ENCODE measurements at regions of chr16 and their contacts with region 1.

Region 1: DNA sequence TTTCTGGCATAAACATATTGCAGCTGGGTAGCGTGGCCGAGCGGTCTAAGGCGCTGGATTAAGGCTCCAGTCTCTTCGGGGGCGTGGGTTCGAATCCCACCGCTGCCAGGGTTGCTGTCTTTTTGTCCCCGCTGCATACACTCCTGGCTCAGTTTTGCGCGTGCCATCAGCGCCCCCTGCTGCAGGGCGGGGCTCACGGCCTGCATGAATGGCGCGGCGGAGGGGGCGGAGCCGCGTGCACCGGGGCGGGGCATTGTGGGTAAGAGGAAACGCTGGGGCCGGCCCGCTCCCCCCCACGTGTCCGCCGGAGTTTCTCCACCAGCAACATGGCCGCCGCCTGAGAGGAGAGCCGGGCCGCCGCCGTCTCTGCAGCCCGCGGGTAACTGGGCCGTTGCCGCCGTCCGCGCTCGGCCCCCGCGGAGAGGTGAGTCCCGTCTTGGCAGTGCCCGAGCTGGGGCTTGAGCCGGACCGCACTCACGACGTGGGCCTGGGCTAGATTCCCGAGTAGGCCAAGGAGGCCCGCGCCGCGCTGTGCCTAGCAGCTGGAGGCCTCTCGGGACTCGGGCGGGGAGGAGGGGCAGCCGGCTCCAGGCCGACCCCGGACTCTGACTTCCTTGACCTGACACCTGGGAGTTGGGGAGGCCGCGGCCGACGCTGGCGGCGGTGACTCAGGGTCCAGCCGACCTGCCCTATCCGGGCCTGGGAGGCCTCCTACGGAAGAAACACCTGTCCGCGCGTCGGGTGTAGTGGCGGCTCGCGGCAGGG is at the start of gene POLR3E:
- DNase-seq: peak; percentile 100
- ATAC-seq: peak; percentile 95
- H3K4me3 ChIP-seq: peak within 1 kb of the TSS; percentile 73 to 97 (median 91)
- H3K4me3 Mint-ChIP-seq: peak within 1 kb of the TSS; percentile 91
- H3K27ac ChIP-seq: peak within 1 kb of the TSS; percentile 93 to 94
- H3K27ac Mint-ChIP-seq: peak within 1 kb of the TSS; percentile 99
- H3K4me1 ChIP-seq: peaks cover 18 to 35% of the 10 kb centered on the region in 2 donors
- H3K4me1 Mint-ChIP-seq: peaks cover 40% of the 10 kb centered on the region
- H3K27me3 ChIP-seq: no peaks in the 10 kb centered on the region
- H3K27me3 Mint-ChIP-seq: no peaks in the 10 kb centered on the region
- CTCF ChIP-seq: peak; percentile 86
- total RNA-seq, gene POLR3E: 98.4 and 101 TPM in 2 replicates

Region 2: GRCh38 chr16:21158208-21159110 is 1138.8 kb before region 1 on chr16 and contains the start of gene LDAF1:
- CTCF ChIA-PET with region 1: no interaction called
- POLR2A ChIA-PET with region 1: no interaction called
- intact Hi-C with region 1: loop called (anchors 5 kb)
- DNase-seq: peak; percentile 82
- ATAC-seq: peak; percentile 90
- H3K4me3 ChIP-seq: peak within 1 kb of the TSS; percentile 71 to 93 (median 85)
- H3K4me3 Mint-ChIP-seq: peak within 1 kb of the TSS; percentile 96
- H3K27ac ChIP-seq: peak within 1 kb of the TSS; percentile 14 to 46
- H3K27ac Mint-ChIP-seq: peak within 1 kb of the TSS; percentile 88
- H3K4me1 ChIP-seq: peaks cover 13 to 18% of the 10 kb centered on the region in 2 donors
- H3K4me1 Mint-ChIP-seq: peaks cover 22% of the 10 kb centered on the region
- H3K27me3 ChIP-seq: no peaks in the 10 kb centered on the region
- H3K27me3 Mint-ChIP-seq: no peaks in the 10 kb centered on the region
- CTCF ChIP-seq: no peak
- total RNA-seq, gene LDAF1: 21.1 and 21.9 TPM in 2 replicates

Region 3: GRCh38 chr16:21708533-21709115 is 588.7 kb before region 1 on chr16:
- CTCF ChIA-PET with region 1: no interaction called
- POLR2A ChIA-PET with region 1: no interaction called
- intact Hi-C with region 1: no loop called
- DNase-seq: peak; percentile 87
- ATAC-seq: peak; percentile 47
- H3K4me3 ChIP-seq: no peak overlapping the region
- H3K4me3 Mint-ChIP-seq: no peak overlapping the region
- H3K27ac ChIP-seq: no peak overlapping the region
- H3K27ac Mint-ChIP-seq: no peak overlapping the region
- H3K4me1 ChIP-seq: peaks cover 7 to 15% of the 10 kb centered on the region in 2 donors
- H3K4me1 Mint-ChIP-seq: peaks cover 9% of the 10 kb centered on the region
- H3K27me3 ChIP-seq: peaks cover 0 to 11% (median 5%) of the 10 kb centered on the region in 4 experiments
- H3K27me3 Mint-ChIP-seq: peaks cover 10% of the 10 kb centered on the region
- CTCF ChIP-seq: peak; percentile 91

Region 4: GRCh38 chr16:21952793-21953540 is 344.3 kb before region 1 on chr16 and contains the start of gene UQCRC2:
- CTCF ChIA-PET with region 1: interaction called, 3 read pairs
- POLR2A ChIA-PET with region 1: interaction called, 3 read pairs
- intact Hi-C with region 1: loop called (anchors 1 kb)
- DNase-seq: peak; percentile 96
- ATAC-seq: peak; percentile 91
- H3K4me3 ChIP-seq: peak within 1 kb of the TSS; percentile 74 to 100 (median 97)
- H3K4me3 Mint-ChIP-seq: peak within 1 kb of the TSS; percentile 98
- H3K27ac ChIP-seq: peak within 1 kb of the TSS; percentile 88 to 97
- H3K27ac Mint-ChIP-seq: peak within 1 kb of the TSS; percentile 97
- H3K4me1 ChIP-seq: peaks cover 34 to 45% of the 10 kb centered on the region in 2 donors
- H3K4me1 Mint-ChIP-seq: peaks cover 65% of the 10 kb centered on the region
- H3K27me3 ChIP-seq: no peaks in the 10 kb centered on the region
- H3K27me3 Mint-ChIP-seq: no peaks in the 10 kb centered on the region
- CTCF ChIP-seq: no peak
- total RNA-seq, gene UQCRC2: 150 and 155 TPM in 2 replicates

Region 5: GRCh38 chr16:22007509-22008214 is 289.6 kb before region 1 on chr16 and contains the start of gene MOSMO:
- CTCF ChIA-PET with region 1: interaction called, 10 read pairs
- POLR2A ChIA-PET with region 1: no interaction called
- intact Hi-C with region 1: no loop called
- DNase-seq: peak; percentile 79
- ATAC-seq: peak; percentile 89
- H3K4me3 ChIP-seq: peak within 1 kb of the TSS; percentile 55 to 97 (median 89)
- H3K4me3 Mint-ChIP-seq: peak within 1 kb of the TSS; percentile 93
- H3K27ac ChIP-seq: peak within 1 kb of the TSS; percentile 60 to 82
- H3K27ac Mint-ChIP-seq: peak within 1 kb of the TSS; percentile 88
- H3K4me1 ChIP-seq: peaks cover 17 to 22% of the 10 kb centered on the region in 2 donors
- H3K4me1 Mint-ChIP-seq: peaks cover 30% of the 10 kb centered on the region
- H3K27me3 ChIP-seq: no peaks in the 10 kb centered on the region
- H3K27me3 Mint-ChIP-seq: no peaks in the 10 kb centered on the region
- CTCF ChIP-seq: no peak
- total RNA-seq, gene MOSMO: 18.6 and 20.2 TPM in 2 replicates

Region 6: DNA sequence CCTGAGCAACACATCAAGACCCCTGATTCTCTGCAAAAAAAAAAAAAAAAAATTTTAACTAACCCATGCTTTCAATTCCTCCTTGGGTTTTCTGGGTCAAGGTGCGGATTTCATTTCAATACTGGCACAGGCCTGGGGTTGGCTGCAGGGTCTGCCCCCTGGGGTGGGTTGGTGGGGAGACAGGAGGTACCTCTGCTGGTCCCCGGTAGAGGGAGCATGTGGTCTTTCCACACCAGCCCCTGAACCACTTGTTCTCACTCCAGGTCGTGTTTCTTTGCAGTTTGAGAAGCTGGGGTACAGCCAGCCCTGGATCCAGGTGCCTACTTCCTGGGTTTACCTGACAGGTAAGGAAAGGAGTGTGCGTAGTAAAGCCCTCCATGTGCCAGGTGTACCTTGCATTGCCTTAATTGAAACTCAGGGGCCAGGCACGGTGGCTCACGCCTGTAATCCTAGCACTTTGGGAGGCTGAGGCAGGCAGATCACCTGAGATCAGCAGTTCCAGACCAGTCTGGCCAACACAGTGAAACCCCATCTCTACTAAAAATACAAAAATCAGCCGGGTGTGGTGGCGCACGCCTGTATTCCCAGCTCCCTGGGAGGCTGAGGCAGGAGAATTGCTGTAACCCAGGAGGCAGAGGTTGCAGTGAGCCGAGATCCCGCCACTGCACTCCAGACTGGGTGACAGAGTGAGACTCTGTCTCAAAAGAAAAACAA is 113.2 kb before region 1 on chr16:
- CTCF ChIA-PET with region 1: interaction called, 53 read pairs
- POLR2A ChIA-PET with region 1: interaction called, 15 read pairs
- intact Hi-C with region 1: loop called (anchors 1 kb)
- DNase-seq: peak; percentile 52
- ATAC-seq: peak; percentile 44
- H3K4me3 ChIP-seq: no peak overlapping the region
- H3K4me3 Mint-ChIP-seq: no peak overlapping the region
- H3K27ac ChIP-seq: no peak overlapping the region
- H3K27ac Mint-ChIP-seq: no peak overlapping the region
- H3K4me1 ChIP-seq: peaks cover 12% of the 10 kb centered on the region in 2 donors
- H3K4me1 Mint-ChIP-seq: peaks cover 11% of the 10 kb centered on the region
- H3K27me3 ChIP-seq: no peaks in the 10 kb centered on the region
- H3K27me3 Mint-ChIP-seq: no peaks in the 10 kb centered on the region
- CTCF ChIP-seq: peak; percentile 56

Region 7: GRCh38 chr16:22206013-22206841 is 91.1 kb before region 1 on chr16 and contains the start of gene EEF2K:
- CTCF ChIA-PET with region 1: interaction called, 31 read pairs
- POLR2A ChIA-PET with region 1: interaction called, 3 read pairs
- intact Hi-C with region 1: loop called (anchors 1 kb)
- DNase-seq: peak; percentile 91
- ATAC-seq: peak; percentile 85
- H3K4me3 ChIP-seq: peak within 1 kb of the TSS; percentile 60 to 82 (median 80)
- H3K4me3 Mint-ChIP-seq: peak within 1 kb of the TSS; percentile 88
- H3K27ac ChIP-seq: peak within 1 kb of the TSS; percentile 68 to 86
- H3K27ac Mint-ChIP-seq: peak within 1 kb of the TSS; percentile 68
- H3K4me1 ChIP-seq: peaks cover 10 to 23% of the 10 kb centered on the region in 2 donors
- H3K4me1 Mint-ChIP-seq: peaks cover 25% of the 10 kb centered on the region
- H3K27me3 ChIP-seq: no peaks in the 10 kb centered on the region
- H3K27me3 Mint-ChIP-seq: no peaks in the 10 kb centered on the region
- CTCF ChIP-seq: peak; percentile 76
- total RNA-seq, gene EEF2K: 28.7 and 30.0 TPM in 2 replicates

Region 8: DNA sequence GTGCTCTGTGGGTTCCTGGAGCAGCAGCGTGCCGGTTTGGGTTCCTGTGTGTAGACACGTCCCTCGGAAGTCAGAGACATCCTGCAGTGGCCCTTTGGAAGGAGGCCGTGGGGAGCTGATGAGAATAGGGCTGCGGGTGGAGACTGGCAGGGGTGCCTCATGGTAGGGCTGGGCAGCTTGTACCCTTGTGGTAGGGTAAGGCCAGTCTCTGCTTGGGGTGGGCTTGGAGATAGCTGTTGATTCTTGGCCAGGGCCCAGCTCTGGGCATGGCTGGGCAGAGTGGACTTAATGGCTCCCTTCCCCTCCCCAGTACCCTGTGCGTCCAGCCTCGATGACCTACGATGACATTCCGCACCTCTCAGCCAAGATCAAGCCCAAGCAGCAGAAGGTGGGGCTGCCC is 10.5 kb after region 1 on chr16:
- CTCF ChIA-PET with region 1: interaction called, 4 read pairs
- POLR2A ChIA-PET with region 1: interaction called, 13 read pairs
- intact Hi-C with region 1: no loop called
- DNase-seq: no peak
- ATAC-seq: no peak
- H3K4me3 ChIP-seq: no peak overlapping the region
- H3K4me3 Mint-ChIP-seq: no peak overlapping the region
- H3K27ac ChIP-seq: no peak overlapping the region
- H3K27ac Mint-ChIP-seq: no peak overlapping the region
- H3K4me1 ChIP-seq: no peaks in the 10 kb centered on the region
- H3K4me1 Mint-ChIP-seq: peaks cover 3% of the 10 kb centered on the region
- H3K27me3 ChIP-seq: no peaks in the 10 kb centered on the region
- H3K27me3 Mint-ChIP-seq: no peaks in the 10 kb centered on the region
- CTCF ChIP-seq: no peak

Measured in B cell (primary cell).